Endothelial cell of umbilical vein (primary cell): ENCODE measurements at regions of chr7 and their contacts with region 1.

Region 1: DNA sequence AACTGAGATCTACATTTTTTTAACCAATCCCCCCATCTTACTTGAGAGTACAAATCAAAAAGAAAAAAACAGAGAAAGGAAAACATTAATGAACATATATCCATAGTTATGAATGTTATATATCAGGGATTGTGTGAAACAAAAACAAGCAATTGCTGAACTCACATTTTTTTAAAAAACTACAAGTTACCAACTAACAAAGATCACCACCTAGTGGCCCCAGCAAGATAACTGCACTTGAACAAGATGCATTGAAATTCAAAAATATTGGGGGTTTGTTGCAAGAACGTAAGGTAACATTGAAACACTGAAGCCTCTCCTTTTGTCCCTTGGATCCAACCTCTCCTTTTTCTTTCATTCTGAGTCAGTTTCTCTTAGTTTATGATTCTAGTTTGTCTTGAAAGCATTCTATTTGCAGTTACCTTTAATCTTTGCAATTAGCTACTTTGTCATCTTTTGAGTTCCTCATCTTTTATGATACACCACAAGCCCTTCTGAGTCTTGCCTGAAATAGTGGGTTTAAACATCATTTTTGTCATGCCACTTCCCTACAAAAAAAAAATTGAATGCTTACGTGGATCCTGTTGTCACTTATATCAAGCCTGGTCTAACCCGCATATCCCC is 87.3 kb upstream of the TES start:
- DNase-seq: peak; percentile 55
- H3K4me3 ChIP-seq: no peak overlapping the region
- H3K27ac ChIP-seq: no peak overlapping the region
- H3K4me1 ChIP-seq: no peaks in the 10 kb centered on the region
- H3K27me3 ChIP-seq: no peaks in the 10 kb centered on the region
- CTCF ChIP-seq: peak; percentile 58 to 64
- POLR2A ChIP-seq: no peak

Region 2: DNA sequence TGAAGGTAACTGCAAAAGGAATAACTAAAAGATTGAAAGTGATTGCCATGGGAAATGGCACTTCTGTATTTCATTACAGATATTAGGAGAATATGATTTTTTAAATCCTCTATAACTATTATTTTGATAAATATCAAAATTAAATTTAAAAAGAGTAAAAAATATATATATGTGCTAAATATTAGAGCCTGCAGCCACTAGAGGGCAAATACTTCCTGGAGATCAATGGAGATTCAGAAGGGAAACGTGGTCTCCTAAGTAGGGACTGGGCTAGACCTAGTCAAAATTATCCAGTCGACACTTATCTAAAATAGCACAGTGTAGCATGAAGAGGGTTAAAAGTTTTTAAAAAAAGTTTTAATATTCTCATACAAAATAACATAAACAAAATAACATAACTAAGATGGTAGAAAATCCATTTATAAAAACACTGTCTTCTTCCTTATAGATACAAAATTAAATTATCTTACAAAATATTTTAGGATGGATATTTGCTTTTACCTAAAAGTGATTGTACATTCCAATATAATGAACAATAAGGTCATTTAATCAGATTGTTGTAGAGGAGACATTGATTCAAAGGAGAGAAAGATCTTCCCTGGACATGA is 766.8 kb before region 1 on chr7:
- CTCF ChIA-PET with region 1: no interaction called
- POLR2A ChIA-PET with region 1: no interaction called
- dilution Hi-C with region 1: no loop called
- intact Hi-C with region 1: loop called (anchors 10 kb)
- DNase-seq: peak; percentile 16
- H3K4me3 ChIP-seq: no peak overlapping the region
- H3K27ac ChIP-seq: no peak overlapping the region
- H3K4me1 ChIP-seq: no peaks in the 10 kb centered on the region
- H3K27me3 ChIP-seq: no peaks in the 10 kb centered on the region
- CTCF ChIP-seq: peak; percentile 24 to 43
- POLR2A ChIP-seq: no peak

Region 3: DNA sequence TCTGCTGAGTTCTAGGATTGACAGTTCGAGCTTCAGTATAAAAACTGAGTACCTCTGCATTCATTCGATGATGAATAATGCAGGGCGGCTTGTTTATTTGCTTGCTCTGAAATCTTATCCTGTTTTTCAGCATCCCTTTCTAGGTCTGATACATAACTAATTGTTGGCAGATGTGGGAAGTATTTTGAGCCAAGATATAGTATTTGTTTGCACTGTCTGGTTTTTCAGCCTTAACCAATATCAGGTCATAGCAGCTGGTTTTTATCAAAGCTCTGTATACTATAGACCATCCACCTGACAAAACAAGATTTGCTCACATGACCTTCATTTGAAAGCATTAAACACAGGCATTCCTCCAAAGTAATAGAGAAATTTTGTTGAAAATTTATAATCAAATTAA is 253.9 kb before region 1 on chr7:
- CTCF ChIA-PET with region 1: interaction called, 3 read pairs
- POLR2A ChIA-PET with region 1: no interaction called
- dilution Hi-C with region 1: no loop called
- intact Hi-C with region 1: loop called (anchors 5 kb)
- DNase-seq: peak; percentile 3
- H3K4me3 ChIP-seq: no peak overlapping the region
- H3K27ac ChIP-seq: no peak overlapping the region
- H3K4me1 ChIP-seq: no peaks in the 10 kb centered on the region
- H3K27me3 ChIP-seq: peaks cover 0 to 2% of the 10 kb centered on the region in 2 experiments
- CTCF ChIP-seq: no peak
- POLR2A ChIP-seq: no peak

Region 4: DNA sequence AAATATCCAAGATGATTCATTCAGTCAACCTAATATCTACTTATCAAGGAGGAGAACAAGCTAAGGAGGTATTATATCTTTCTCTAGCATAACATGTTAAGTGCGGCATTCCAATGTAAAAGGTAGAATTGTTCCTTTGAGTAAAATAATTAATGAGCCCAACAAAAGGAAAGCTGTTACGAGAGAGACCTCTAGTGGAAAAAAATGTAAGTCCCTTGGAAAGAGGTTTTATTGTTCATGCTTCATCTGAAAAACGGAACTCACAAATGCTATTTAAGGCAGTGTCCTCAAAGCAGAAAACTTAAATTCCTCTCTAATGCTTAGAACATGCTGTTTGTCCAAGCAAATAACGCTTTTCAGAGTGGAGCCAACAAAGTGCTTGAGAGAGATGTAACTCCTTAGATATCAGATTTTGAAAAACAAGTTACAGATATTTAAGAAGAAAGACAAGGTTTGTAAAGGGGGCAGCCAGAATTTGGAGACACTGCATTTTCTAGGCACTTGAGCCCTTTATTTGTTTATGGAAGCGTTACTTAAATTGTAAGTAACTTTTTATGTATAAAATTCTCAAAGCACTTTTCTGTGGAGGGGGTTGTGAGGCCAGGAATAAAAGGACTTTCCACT is 212.4 kb before region 1 on chr7:
- CTCF ChIA-PET with region 1: interaction called, 11 read pairs
- POLR2A ChIA-PET with region 1: no interaction called
- dilution Hi-C with region 1: no loop called
- intact Hi-C with region 1: loop called (anchors 1 kb)
- DNase-seq: peak; percentile 64
- H3K4me3 ChIP-seq: no peak overlapping the region
- H3K27ac ChIP-seq: no peak overlapping the region
- H3K4me1 ChIP-seq: no peaks in the 10 kb centered on the region
- H3K27me3 ChIP-seq: no peaks in the 10 kb centered on the region
- CTCF ChIP-seq: peak in 1 of 2 donors; percentile 53
- POLR2A ChIP-seq: no peak

Region 5: DNA sequence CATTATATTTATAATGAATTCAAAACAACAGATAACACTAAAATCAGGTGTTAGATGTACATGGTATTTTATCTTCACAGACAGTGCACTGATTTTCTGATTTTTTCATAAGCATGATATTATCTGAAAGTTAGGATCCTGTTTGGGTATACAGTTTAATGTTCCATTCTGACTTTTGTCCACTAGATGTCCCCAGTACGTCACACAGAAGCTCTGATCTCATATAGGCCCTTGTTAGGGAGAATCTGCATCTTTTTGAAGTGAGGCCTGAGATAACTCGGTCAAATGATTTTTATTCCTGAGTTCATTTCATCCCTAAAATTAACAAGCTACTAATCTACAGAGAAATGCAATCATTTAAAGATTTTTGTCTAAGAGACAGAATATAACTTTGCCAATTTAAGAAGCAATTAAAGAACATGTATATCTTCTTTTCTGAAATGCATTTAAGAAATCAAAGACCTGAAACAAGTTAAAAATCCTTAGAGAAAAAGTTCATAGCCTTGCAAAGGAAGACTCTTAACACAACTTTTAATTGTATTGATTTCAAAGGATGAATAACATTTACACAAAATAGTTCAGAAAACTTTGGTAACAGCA is 15.2 kb after region 1 on chr7:
- CTCF ChIA-PET with region 1: interaction called, 10 read pairs
- POLR2A ChIA-PET with region 1: no interaction called
- dilution Hi-C with region 1: no loop called
- intact Hi-C with region 1: no loop called
- DNase-seq: peak; percentile 81
- H3K4me3 ChIP-seq: no peak overlapping the region
- H3K27ac ChIP-seq: no peak overlapping the region
- H3K4me1 ChIP-seq: peaks cover 6% of the 10 kb centered on the region
- H3K27me3 ChIP-seq: no peaks in the 10 kb centered on the region
- CTCF ChIP-seq: peak; percentile 45 to 51
- POLR2A ChIP-seq: no peak

Region 6: DNA sequence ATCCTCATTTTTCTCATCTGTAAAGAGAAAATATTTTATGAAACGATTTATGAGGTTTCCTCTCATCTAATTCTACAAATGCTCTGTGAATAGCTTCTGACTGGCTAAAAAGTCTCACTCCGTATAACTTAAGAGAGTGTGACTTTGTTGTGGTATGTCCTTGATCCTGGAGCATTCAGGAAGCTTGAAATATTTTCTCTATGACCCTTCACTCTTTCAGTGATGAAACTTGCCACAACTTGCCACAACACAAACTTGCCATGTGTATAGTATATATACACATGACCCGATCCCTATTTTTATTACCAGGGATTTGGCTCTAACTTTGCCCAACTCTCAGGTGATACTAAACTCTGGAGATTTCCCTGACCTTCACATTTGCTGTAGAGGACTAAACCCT is 161.3 kb after region 1 on chr7:
- CTCF ChIA-PET with region 1: no interaction called
- POLR2A ChIA-PET with region 1: no interaction called
- dilution Hi-C with region 1: no loop called
- intact Hi-C with region 1: no loop called
- DNase-seq: no peak
- H3K4me3 ChIP-seq: no peak overlapping the region
- H3K27ac ChIP-seq: no peak overlapping the region
- H3K4me1 ChIP-seq: peaks cover 76% of the 10 kb centered on the region
- H3K27me3 ChIP-seq: no peaks in the 10 kb centered on the region
- CTCF ChIP-seq: no peak
- POLR2A ChIP-seq: no peak